Activated naive CD4-positive, alpha-beta T cell treated with anti-CD3 and anti-CD28 coated beads, Interleukin-2, amount 10 ng/mL, durations not matched to agents 7 days and 5 days (primary cell): ENCODE measurements at regions of chr12 and their contacts with region 1.

Region 1: DNA sequence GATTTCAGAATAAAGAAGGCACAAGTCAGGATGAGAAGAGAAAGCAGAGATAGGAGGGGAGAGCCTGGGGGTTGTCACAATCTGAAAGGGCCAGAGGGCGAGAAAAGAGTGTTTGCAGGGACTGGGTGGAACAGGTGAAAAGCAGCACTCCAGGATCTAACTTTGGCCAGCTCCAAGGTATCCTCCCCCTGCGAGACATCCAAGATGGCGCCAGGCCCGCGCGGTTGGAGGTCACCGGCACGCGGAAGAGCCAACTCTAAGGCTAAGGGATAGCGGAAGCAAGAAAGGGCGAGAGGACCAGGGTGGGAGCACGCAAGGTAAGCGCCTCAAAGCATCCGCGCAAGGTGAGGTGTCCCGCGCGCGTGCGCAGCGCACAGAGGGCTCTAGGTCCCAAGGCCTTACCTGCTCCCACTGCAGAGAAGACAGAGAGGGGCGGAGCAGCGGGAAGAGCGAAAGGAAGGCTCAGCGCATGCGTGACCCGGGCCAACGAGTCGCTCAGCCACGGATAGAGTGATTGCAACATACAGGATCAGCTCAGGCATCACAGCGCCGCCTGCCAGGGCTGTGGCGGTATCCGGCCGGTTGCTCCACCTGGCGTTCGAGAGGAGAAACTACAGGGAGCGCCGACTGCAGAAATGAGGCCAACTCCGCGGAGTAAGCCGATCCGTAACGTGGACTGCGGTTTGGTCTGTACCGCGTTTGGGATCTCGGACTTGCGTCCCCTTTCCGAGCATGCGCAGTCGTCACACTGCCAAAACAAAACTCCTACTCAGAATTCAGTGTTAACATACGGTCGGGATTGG is at the start of gene ATP5MC2:
- DNase-seq: peak; percentile 98
- H3K4me3 Mint-ChIP-seq: peak within 1 kb of the TSS; percentile 97
- H3K27ac Mint-ChIP-seq: peak within 1 kb of the TSS; percentile 95
- H3K4me1 Mint-ChIP-seq: peaks cover 44% of the 10 kb centered on the region
- H3K27me3 Mint-ChIP-seq: peaks cover 44% of the 10 kb centered on the region

Region 2: DNA sequence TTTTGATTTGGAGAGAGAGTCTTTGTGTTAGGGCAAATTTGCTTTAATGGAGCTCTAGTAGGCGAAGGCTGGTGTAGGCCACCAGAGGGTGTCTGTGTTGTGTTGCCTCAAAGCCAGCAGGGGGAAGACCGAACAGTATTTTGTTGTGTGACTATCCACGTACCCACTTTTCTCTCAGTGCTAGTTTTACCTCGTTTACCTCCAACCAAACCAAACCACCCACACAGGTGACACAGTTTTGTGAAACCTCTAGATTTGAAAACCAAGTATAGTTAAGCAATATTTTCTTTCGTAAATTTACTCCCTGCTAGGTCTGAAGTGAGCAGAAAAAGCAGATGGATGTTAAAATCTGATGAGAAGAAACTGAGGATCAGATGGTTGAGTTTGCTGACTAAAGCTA is 132.3 kb before region 1 on chr12:
- CTCF ChIA-PET with region 1: interaction called, 95 read pairs
- DNase-seq: peak; percentile 70
- H3K4me3 Mint-ChIP-seq: no peak overlapping the region
- H3K27ac Mint-ChIP-seq: peak overlapping the region; percentile 50
- H3K4me1 Mint-ChIP-seq: peaks cover 10% of the 10 kb centered on the region
- H3K27me3 Mint-ChIP-seq: no peaks in the 10 kb centered on the region

Region 3: DNA sequence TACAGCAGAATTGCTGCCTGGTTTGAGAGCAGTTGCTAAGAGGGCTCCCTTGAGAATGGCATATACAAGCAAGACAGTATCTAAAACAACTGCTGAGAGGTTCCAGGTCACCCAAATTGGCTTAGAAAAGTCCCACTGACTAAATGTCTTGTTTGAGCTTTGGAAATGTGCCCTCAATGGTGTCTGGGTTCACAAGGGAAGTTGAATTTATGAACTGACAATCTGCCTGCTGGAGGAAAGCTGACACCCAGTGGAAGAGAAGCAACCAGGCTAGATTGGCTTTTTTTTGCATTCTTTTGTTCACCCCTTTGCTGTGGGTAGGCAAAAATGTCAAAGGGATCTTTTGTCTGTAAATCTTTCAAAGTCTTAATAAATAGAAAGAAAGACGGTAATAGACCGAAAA is 124.0 kb before region 1 on chr12:
- CTCF ChIA-PET with region 1: interaction called, 12 read pairs
- DNase-seq: no peak
- H3K4me3 Mint-ChIP-seq: no peak overlapping the region
- H3K27ac Mint-ChIP-seq: no peak overlapping the region
- H3K4me1 Mint-ChIP-seq: peaks cover 10% of the 10 kb centered on the region
- H3K27me3 Mint-ChIP-seq: no peaks in the 10 kb centered on the region

Region 4: GRCh38 chr12:53575502-53576253 is 100.2 kb before region 1 on chr12:
- CTCF ChIA-PET with region 1: no interaction called
- DNase-seq: no peak
- H3K4me3 Mint-ChIP-seq: no peak overlapping the region
- H3K27ac Mint-ChIP-seq: no peak overlapping the region
- H3K4me1 Mint-ChIP-seq: peaks cover 35% of the 10 kb centered on the region
- H3K27me3 Mint-ChIP-seq: no peaks in the 10 kb centered on the region

Region 5: DNA sequence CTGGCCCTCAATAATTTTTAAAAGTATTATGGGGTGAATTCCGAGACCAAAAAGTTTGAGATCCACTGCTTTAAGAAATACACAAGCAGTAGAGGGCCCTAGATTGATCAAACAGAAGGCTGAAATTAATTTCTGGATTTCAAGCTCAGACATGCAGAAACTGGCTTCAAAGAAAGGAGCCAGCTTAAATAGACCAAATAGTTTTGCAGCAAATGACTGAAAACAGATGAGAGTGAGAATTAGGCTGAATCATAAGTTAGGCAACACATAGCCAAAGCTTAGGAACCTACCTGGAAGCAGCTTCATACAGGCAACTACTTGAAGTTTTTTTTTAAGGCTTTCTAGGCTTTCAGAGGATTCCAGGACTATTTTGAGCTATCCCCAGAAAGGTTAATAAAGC is 62.0 kb before region 1 on chr12:
- CTCF ChIA-PET with region 1: interaction called, 13 read pairs
- DNase-seq: no peak
- H3K4me3 Mint-ChIP-seq: no peak overlapping the region
- H3K27ac Mint-ChIP-seq: no peak overlapping the region
- H3K4me1 Mint-ChIP-seq: peaks cover 25% of the 10 kb centered on the region
- H3K27me3 Mint-ChIP-seq: no peaks in the 10 kb centered on the region

Region 6: DNA sequence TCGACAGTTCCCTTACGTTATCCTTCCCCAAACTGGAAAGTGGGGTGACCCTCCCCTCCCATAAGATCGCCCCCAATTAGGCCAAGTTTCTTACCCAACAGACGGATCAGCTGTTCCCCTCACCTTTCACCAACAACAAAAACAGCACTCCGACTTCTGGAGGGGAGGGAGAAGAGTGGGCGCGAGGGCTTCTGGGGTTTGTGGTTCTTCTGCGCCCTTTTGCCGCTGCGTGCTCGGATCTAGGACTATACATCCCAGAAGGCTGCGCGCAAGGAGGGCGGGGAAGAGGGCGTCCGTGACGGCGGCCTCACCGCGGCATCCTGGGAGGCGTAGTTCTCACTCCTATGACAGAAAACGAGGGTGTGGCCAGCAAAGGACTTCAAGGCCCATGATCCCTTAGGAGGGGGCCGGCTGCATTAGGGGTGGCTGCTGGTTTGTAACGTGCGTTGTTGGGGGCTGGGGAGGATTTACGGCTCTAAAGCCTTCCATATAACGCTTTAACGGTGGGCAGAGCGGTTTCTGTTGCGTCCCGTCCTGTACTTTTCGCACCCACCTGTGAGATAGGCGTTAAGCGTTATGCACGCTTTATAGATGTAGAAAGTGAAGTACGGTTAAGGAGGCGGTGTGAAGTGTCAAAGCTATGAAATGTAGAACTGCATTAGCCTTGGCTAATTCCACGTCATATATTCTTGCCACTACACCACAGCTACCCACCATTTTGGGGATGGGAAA is 51.6 kb after region 1 on chr12 and contains the start of gene CALCOCO1:
- CTCF ChIA-PET with region 1: interaction called, 10 read pairs
- DNase-seq: peak; percentile 99
- H3K4me3 Mint-ChIP-seq: peak within 1 kb of the TSS; percentile 89
- H3K27ac Mint-ChIP-seq: peak within 1 kb of the TSS; percentile 91
- H3K4me1 Mint-ChIP-seq: peaks cover 27% of the 10 kb centered on the region
- H3K27me3 Mint-ChIP-seq: peaks cover 4% of the 10 kb centered on the region

Region 7: DNA sequence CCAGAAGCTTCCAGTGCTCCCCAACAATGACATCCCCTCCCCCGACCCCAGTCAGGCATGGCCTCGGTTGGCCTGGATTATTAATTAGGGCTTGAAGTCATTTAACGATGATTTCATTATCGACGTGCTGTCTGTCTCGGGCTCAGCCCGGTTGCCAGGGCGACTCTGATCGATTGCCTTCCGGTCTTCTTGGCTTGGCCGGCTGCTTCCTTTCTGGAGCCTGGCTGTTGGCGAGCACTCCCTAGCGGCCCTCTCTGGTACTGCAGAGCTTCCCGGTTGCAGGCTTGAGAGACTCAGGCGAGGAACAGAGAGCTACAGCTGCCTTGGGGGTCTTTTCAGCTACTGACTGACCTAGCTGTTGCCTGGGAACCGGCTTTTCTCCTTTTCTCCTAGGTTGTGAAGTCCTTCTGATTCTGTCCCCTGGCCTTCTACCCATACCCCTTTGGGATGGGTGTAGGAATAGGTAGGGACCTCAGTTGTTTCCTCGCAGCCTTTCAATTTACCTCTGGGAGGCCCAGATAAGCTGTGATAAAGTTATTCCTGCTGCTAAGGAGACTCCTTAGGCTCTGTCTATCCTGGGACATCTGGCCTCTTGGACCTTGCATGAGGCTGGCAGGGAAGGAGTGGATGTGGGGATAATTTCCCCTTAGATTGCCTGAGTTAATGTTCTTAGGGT is 81.4 kb after region 1 on chr12:
- CTCF ChIA-PET with region 1: no interaction called
- DNase-seq: peak; percentile 89
- H3K4me3 Mint-ChIP-seq: peak overlapping the region; percentile 25
- H3K27ac Mint-ChIP-seq: no peak overlapping the region
- H3K4me1 Mint-ChIP-seq: peaks cover 15% of the 10 kb centered on the region
- H3K27me3 Mint-ChIP-seq: peaks cover 49% of the 10 kb centered on the region